Activated CD4-positive, alpha-beta memory T cell treated with anti-CD3 and anti-CD28 coated beads for 36 hours (primary cell): ENCODE measurements at regions of chr1 and their contacts with region 1.

Region 1: GRCh38 chr1:153922972-153923925 is at the start of gene GATAD2B:
- DNase-seq: peak; percentile 99
- H3K4me3 Mint-ChIP-seq: peak within 1 kb of the TSS; percentile 77
- H3K27ac Mint-ChIP-seq: peak within 1 kb of the TSS; percentile 96
- H3K4me1 Mint-ChIP-seq: peaks cover 38% of the 10 kb centered on the region
- H3K27me3 Mint-ChIP-seq: no peaks in the 10 kb centered on the region
- total RNA-seq, gene GATAD2B: 66.4 to 67.9 TPM

Region 2: GRCh38 chr1:153478692-153479618 is 444.3 kb before region 1 on chr1:
- CTCF ChIA-PET with region 1: no interaction called
- POLR2A ChIA-PET with region 1: no interaction called
- intact Hi-C with region 1: no loop called
- DNase-seq: no peak
- H3K4me3 Mint-ChIP-seq: no peak overlapping the region
- H3K27ac Mint-ChIP-seq: no peak overlapping the region
- H3K4me1 Mint-ChIP-seq: no peaks in the 10 kb centered on the region
- H3K27me3 Mint-ChIP-seq: peaks cover 21% of the 10 kb centered on the region

Region 3: GRCh38 chr1:153633716-153634665 is 289.3 kb before region 1 on chr1 and contains the start of gene CHTOP:
- CTCF ChIA-PET with region 1: no interaction called
- POLR2A ChIA-PET with region 1: interaction called, 3 read pairs
- intact Hi-C with region 1: loop called (anchors 5 kb)
- DNase-seq: peak; percentile 98
- H3K4me3 Mint-ChIP-seq: peak within 1 kb of the TSS; percentile 92
- H3K27ac Mint-ChIP-seq: peak within 1 kb of the TSS; percentile 100
- H3K4me1 Mint-ChIP-seq: peaks cover 45% of the 10 kb centered on the region
- H3K27me3 Mint-ChIP-seq: no peaks in the 10 kb centered on the region
- total RNA-seq, gene CHTOP: 92.5 to 94.7 TPM

Region 4: GRCh38 chr1:153727463-153728304 is 195.6 kb before region 1 on chr1 and contains the start of gene INTS3:
- CTCF ChIA-PET with region 1: no interaction called
- POLR2A ChIA-PET with region 1: no interaction called
- intact Hi-C with region 1: loop called (anchors 2 kb)
- DNase-seq: peak; percentile 100
- H3K4me3 Mint-ChIP-seq: peak within 1 kb of the TSS; percentile 95
- H3K27ac Mint-ChIP-seq: peak within 1 kb of the TSS; percentile 97
- H3K4me1 Mint-ChIP-seq: peaks cover 39% of the 10 kb centered on the region
- H3K27me3 Mint-ChIP-seq: no peaks in the 10 kb centered on the region
- total RNA-seq, gene INTS3: 45.5 to 47.7 TPM

Region 5: GRCh38 chr1:153805042-153805745 is 118.1 kb before region 1 on chr1:
- CTCF ChIA-PET with region 1: interaction called, 3 read pairs
- POLR2A ChIA-PET with region 1: interaction called, 5 read pairs
- intact Hi-C with region 1: loop called (anchors 1 kb)
- DNase-seq: peak; percentile 87
- H3K4me3 Mint-ChIP-seq: peak overlapping the region; percentile 5
- H3K27ac Mint-ChIP-seq: peak overlapping the region; percentile 81
- H3K4me1 Mint-ChIP-seq: peaks cover 30% of the 10 kb centered on the region
- H3K27me3 Mint-ChIP-seq: no peaks in the 10 kb centered on the region

Region 6: GRCh38 chr1:153958111-153958960 is 35.1 kb after region 1 on chr1 and contains the start of gene CRTC2:
- CTCF ChIA-PET with region 1: no interaction called
- POLR2A ChIA-PET with region 1: interaction called, 7 read pairs
- intact Hi-C with region 1: loop called (anchors 2 kb)
- DNase-seq: peak; percentile 99
- H3K4me3 Mint-ChIP-seq: peak within 1 kb of the TSS; percentile 97
- H3K27ac Mint-ChIP-seq: peak within 1 kb of the TSS; percentile 96
- H3K4me1 Mint-ChIP-seq: peaks cover 51% of the 10 kb centered on the region
- H3K27me3 Mint-ChIP-seq: no peaks in the 10 kb centered on the region
- total RNA-seq, gene CRTC2: 60.8 to 78.0 TPM

Region 7: GRCh38 chr1:154183045-154183915 is 260.0 kb after region 1 on chr1:
- CTCF ChIA-PET with region 1: no interaction called
- POLR2A ChIA-PET with region 1: no interaction called
- intact Hi-C with region 1: loop called (anchors 1 kb)
- DNase-seq: peak; percentile 98
- H3K4me3 Mint-ChIP-seq: peak overlapping the region; percentile 98
- H3K27ac Mint-ChIP-seq: peak overlapping the region; percentile 96
- H3K4me1 Mint-ChIP-seq: peaks cover 37% of the 10 kb centered on the region
- H3K27me3 Mint-ChIP-seq: no peaks in the 10 kb centered on the region